ENCODE measurements at regions of chr2 and their contacts with region 1.

Region 1: DNA sequence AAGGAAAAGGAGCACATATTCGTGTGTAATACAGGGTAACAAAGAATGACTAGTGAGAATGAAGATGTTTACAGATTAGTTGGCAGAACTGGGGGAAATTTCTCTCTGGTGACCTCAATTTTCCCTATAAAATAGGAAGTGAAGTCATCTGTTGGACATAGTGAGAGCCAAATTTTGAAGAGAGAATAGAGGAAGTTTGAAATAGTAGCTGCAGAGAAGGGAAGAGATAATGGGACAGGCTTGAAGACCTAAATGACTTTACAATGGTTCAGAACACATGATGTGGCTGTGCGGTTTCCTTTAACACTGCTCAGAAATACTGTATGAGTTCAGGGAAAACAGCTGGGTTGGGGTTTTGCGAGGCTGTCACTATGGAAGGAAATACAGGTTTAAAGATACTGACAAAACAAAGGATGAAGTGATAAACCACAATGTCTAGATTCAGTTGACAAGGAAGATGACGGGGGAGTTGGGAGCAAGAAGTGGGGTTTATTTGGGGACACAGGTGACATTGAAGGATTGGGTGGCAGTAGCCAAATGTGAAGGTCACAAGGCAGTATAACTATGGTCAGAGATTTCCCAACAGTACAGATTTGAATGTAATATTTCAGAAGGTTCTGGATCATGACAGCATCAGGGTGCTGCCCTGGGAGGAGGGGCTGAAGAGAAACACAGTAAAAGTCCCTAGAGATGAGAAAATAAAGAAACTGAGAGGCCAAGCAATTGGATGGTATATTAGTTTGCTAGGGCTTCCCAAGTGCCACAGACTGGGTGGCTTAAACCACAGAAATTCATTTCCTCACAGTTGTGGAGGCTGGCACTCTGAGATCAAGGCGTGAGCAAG is 82.6 kb upstream of the TANK start:
- DNase-seq: peak; percentile 88 to 95 (median 95)
- H3K4me3 ChIP-seq: peak overlapping the region in 2 of 3 experiments; percentile 22 to 37
- H3K4me3 Mint-ChIP-seq: peak overlapping the region; percentile 62 to 86
- H3K27ac ChIP-seq: peak overlapping the region; percentile 75 to 91
- H3K27ac Mint-ChIP-seq: peak overlapping the region; percentile 97 to 100 (median 100)
- H3K4me1 ChIP-seq: peaks cover 24 to 29% of the 10 kb centered on the region in 2 donors
- H3K4me1 Mint-ChIP-seq: peaks cover 29% of the 10 kb centered on the region
- H3K27me3 ChIP-seq: no peaks in the 10 kb centered on the region
- H3K27me3 Mint-ChIP-seq: peaks cover 0 to 4% (median 0%) of the 10 kb centered on the region in 3 donors
- CTCF ChIP-seq: no peak

Region 2: DNA sequence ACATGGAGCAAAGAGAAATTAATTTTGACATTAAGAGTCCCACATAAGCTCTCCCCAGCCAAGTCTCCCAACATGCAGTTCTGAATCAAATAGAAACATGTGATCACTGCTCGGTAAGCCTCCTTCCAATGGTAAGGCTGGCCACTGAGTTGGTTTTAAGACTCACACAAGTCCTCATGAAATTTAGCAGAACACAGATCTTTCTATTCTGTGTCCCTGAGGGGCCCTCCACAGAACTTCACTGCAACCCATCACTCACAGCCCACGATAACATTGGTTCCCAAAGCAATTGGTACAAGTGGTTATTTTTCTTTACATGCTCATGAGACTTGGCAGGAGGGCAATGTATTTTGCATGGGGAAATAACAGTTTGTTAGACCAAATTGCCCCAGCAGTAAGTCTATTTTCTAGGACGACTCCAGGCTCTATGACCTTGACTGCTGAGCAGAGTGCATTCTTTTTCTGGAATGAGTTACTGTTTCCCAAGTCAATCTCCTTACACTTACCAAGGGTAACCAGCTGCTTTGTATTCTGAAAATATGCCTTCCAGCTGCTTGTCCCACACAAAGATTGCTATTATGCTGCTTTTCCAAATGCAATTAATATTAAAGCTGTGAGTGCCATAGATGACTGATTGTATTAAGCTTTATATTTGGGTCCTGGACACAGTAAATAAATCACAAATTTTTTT is 59.7 kb before region 1 on chr2:
- intact Hi-C with region 1: no loop called
- DNase-seq: no peak
- H3K4me3 ChIP-seq: no peak overlapping the region
- H3K4me3 Mint-ChIP-seq: no peak overlapping the region
- H3K27ac ChIP-seq: no peak overlapping the region
- H3K27ac Mint-ChIP-seq: no peak overlapping the region
- H3K4me1 ChIP-seq: no peaks in the 10 kb centered on the region
- H3K4me1 Mint-ChIP-seq: no peaks in the 10 kb centered on the region
- H3K27me3 ChIP-seq: no peaks in the 10 kb centered on the region
- H3K27me3 Mint-ChIP-seq: peaks cover 0 to 2% (median 0%) of the 10 kb centered on the region in 3 donors
- CTCF ChIP-seq: no peak

Region 3: DNA sequence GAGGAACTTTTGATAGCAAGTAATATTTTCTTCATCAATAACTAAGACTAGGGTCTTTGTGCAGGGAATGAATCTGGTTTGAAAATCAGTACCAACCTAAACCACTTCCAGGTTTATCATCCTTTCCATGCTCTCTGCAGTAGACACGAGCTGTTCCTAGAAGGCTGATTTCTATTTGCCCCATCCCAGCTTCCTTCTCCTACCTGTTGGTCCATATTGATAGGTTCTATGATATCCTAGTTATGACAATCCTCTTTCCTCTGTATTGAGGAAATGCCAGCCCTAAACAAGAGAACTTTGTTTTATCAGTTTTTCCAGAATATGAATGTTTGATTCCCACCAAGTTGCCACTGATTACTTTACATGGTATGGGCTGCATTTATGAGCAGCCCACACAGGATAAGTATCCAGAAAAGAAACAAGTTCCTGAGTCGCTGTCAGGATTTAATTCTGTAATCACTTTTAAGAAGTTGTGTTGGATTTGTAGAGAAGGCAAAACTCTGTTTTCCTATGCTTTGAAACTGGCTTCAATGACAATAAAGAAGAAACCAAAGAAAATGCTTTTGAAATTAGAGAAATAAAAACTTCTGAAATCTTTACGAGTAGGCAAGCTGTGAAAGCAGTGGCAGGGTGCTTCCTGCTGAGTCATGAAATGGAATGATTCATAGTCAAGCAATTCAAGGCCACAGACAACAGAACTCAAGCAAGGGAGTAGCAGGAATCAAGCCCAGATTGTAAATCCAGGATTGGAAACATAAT is 45.4 kb after region 1 on chr2:
- intact Hi-C with region 1: loop called in 1 of 2 experiments (anchors 5 kb)
- DNase-seq: peak; percentile 70 to 87 (median 80)
- H3K4me3 ChIP-seq: peak overlapping the region in 2 of 3 experiments; percentile 49 to 54
- H3K4me3 Mint-ChIP-seq: peak overlapping the region in 1 of 2 donors; percentile 82
- H3K27ac ChIP-seq: peak overlapping the region in 1 of 2 donors; percentile 76
- H3K27ac Mint-ChIP-seq: peak overlapping the region; percentile 80 to 89 (median 86)
- H3K4me1 ChIP-seq: peaks cover 21 to 25% of the 10 kb centered on the region in 2 donors
- H3K4me1 Mint-ChIP-seq: peaks cover 35% of the 10 kb centered on the region
- H3K27me3 ChIP-seq: no peaks in the 10 kb centered on the region
- H3K27me3 Mint-ChIP-seq: peaks cover 0 to 4% (median 2%) of the 10 kb centered on the region in 3 donors
- CTCF ChIP-seq: no peak

Region 4: GRCh38 chr2:161160226-161161069 is 82.9 kb after region 1 on chr2 and contains the start of gene TANK:
- intact Hi-C with region 1: loop called in 1 of 2 experiments (anchors 5 kb)
- DNase-seq: peak; percentile 96 to 97 (median 97)
- H3K4me3 ChIP-seq: peak within 1 kb of the TSS; percentile 76 to 97 (median 94)
- H3K4me3 Mint-ChIP-seq: peak within 1 kb of the TSS; percentile 99 to 100
- H3K27ac ChIP-seq: peak within 1 kb of the TSS; percentile 99
- H3K27ac Mint-ChIP-seq: peak within 1 kb of the TSS; percentile 100
- H3K4me1 ChIP-seq: peaks cover 35 to 49% of the 10 kb centered on the region in 2 donors
- H3K4me1 Mint-ChIP-seq: peaks cover 37% of the 10 kb centered on the region
- H3K27me3 ChIP-seq: no peaks in the 10 kb centered on the region
- H3K27me3 Mint-ChIP-seq: no peaks in the 10 kb centered on the region
- CTCF ChIP-seq: no peak
- polyA plus RNA-seq, gene TANK: 72.7 to 91.7 (median 73.5) TPM

Measured in CD14-positive monocyte (primary cell).